HCT116 (cell line): ENCODE measurements at regions of chr10 and their contacts with region 1.

Region 1: DNA sequence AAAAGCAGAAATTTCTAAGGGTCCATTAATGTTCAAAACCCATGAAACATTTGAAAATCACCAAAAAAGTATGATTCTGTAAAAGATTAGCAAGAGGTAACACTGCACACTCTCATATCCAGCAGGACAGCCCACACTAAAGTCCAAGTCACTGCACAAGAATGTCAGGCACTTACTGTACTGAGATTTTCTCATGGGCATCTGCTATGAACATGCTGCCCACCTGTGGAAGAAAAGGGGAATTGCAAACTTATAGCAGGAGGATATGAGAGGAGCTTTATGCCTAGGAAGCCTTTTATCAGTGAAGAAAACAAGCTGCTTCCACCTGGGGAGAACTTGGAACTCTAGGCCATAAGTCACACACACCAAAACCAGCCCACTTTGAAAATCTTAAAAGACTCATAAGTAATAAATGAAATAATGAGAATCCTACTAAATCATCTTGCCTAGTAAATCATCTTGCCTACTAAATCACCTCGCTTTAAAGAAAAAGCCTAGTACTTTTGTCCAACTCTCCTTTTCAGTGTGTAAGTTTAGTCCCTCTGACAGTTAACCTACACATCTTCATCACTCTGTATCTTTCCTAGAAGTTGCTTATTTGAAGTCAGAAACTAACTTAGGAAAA is 46.1 kb downstream of the ARMH3 start:
- DNase-seq: peak; percentile 88
- ATAC-seq: peak; percentile 97
- H3K4me3 ChIP-seq: no peak overlapping the region
- H3K27ac ChIP-seq: no peak overlapping the region
- H3K4me1 ChIP-seq: peaks cover 5 to 7% of the 10 kb centered on the region in 2 experiments
- H3K27me3 ChIP-seq: no peaks in the 10 kb centered on the region
- CTCF ChIP-seq: peak; percentile 98 to 100 (median 99)
- POLR2A ChIP-seq: no peak
- RAD21 ChIP-seq: peak; percentile 100

Region 2: DNA sequence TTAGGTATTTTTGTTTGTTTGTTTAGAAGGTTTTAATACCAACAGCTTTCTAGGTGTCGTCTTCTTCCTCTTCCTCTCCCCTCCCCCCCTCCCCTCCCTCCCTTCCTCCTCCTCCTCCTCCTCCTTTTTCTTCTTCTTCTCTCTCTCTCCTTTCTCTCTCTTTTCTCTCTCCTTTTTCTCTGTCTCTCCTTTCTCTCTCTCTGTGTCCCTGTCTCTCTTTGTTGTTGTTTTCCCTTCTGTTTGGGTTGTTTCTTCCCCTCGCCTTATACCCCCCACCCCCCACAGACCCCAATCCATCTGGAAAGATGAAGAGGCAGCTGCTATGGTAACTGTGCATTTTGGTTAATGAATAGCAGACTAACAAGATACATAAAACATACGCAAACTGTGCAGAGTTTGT is 580.5 kb before region 1 on chr10:
- CTCF ChIA-PET with region 1: no interaction called
- POLR2A ChIA-PET with region 1: no interaction called
- RAD21 ChIA-PET with region 1: no interaction called
- intact Hi-C with region 1: no loop called
- DNase-seq: no peak
- ATAC-seq: no peak
- H3K4me3 ChIP-seq: no peak overlapping the region
- H3K27ac ChIP-seq: no peak overlapping the region
- H3K4me1 ChIP-seq: no peaks in the 10 kb centered on the region
- H3K27me3 ChIP-seq: no peaks in the 10 kb centered on the region
- CTCF ChIP-seq: no peak
- POLR2A ChIP-seq: no peak
- RAD21 ChIP-seq: no peak

Region 3: GRCh38 chr10:101782811-101783735 is 226.8 kb before region 1 on chr10 and contains the start of gene NPM3:
- CTCF ChIA-PET with region 1: interaction called, 15 read pairs
- POLR2A ChIA-PET with region 1: no interaction called
- RAD21 ChIA-PET with region 1: interaction called in 1 of 2 experiments, 7 read pairs
- intact Hi-C with region 1: loop called (anchors 2 kb)
- DNase-seq: peak; percentile 59
- ATAC-seq: peak; percentile 74
- H3K4me3 ChIP-seq: peak within 1 kb of the TSS; percentile 74 to 90
- H3K27ac ChIP-seq: peak within 1 kb of the TSS; percentile 66
- H3K4me1 ChIP-seq: peaks cover 19 to 45% of the 10 kb centered on the region in 2 experiments
- H3K27me3 ChIP-seq: no peaks in the 10 kb centered on the region
- CTCF ChIP-seq: no peak
- POLR2A ChIP-seq: peak; percentile 65
- RAD21 ChIP-seq: no peak
- total RNA-seq, gene NPM3: 267 TPM

Region 4: GRCh38 chr10:101834341-101834740 is 175.6 kb before region 1 on chr10:
- CTCF ChIA-PET with region 1: interaction called, 267 read pairs
- POLR2A ChIA-PET with region 1: interaction called, 21 read pairs
- RAD21 ChIA-PET with region 1: interaction called, 37 to 50 read pairs
- intact Hi-C with region 1: loop called (anchors 1 kb)
- DNase-seq: no peak
- ATAC-seq: no peak
- H3K4me3 ChIP-seq: no peak overlapping the region
- H3K27ac ChIP-seq: no peak overlapping the region
- H3K4me1 ChIP-seq: peaks cover 23 to 54% of the 10 kb centered on the region in 2 experiments
- H3K27me3 ChIP-seq: no peaks in the 10 kb centered on the region
- CTCF ChIP-seq: no peak
- POLR2A ChIP-seq: no peak
- RAD21 ChIP-seq: no peak

Region 5: GRCh38 chr10:101889256-101890210 is 120.4 kb before region 1 on chr10:
- CTCF ChIA-PET with region 1: interaction called, 92 read pairs
- POLR2A ChIA-PET with region 1: no interaction called
- RAD21 ChIA-PET with region 1: interaction called, 5 to 13 read pairs
- intact Hi-C with region 1: loop called (anchors 1 kb)
- DNase-seq: peak; percentile 69
- ATAC-seq: peak; percentile 90
- H3K4me3 ChIP-seq: no peak overlapping the region
- H3K27ac ChIP-seq: no peak overlapping the region
- H3K4me1 ChIP-seq: peaks cover 4 to 18% of the 10 kb centered on the region in 2 experiments; a peak in 3 of 4 replicates
- H3K27me3 ChIP-seq: no peaks in the 10 kb centered on the region
- CTCF ChIP-seq: peak; percentile 93 to 99 (median 99)
- POLR2A ChIP-seq: no peak
- RAD21 ChIP-seq: peak; percentile 96

Region 6: GRCh38 chr10:101995451-101996063 is 14.4 kb before region 1 on chr10:
- CTCF ChIA-PET with region 1: interaction called, 15 read pairs
- POLR2A ChIA-PET with region 1: interaction called, 3 read pairs
- RAD21 ChIA-PET with region 1: interaction called in 1 of 2 experiments, 4 read pairs
- intact Hi-C with region 1: no loop called
- DNase-seq: no peak
- ATAC-seq: no peak
- H3K4me3 ChIP-seq: no peak overlapping the region
- H3K27ac ChIP-seq: no peak overlapping the region
- H3K4me1 ChIP-seq: peaks cover 7 to 17% of the 10 kb centered on the region in 2 experiments; a peak in 3 of 4 replicates
- H3K27me3 ChIP-seq: no peaks in the 10 kb centered on the region
- CTCF ChIP-seq: no peak
- POLR2A ChIP-seq: no peak
- RAD21 ChIP-seq: no peak